ENCODE measurements at regions of chr5 and their contacts with region 1.

Region 1: GRCh38 chr5:91403438-91403837 is 20.3 kb upstream of the ARRDC3 start:
- DNase-seq: no peak
- ATAC-seq: no peak
- H3K4me3 ChIP-seq: no peak overlapping the region
- H3K27ac ChIP-seq: no peak overlapping the region
- H3K4me1 ChIP-seq: no peaks in the 10 kb centered on the region
- H3K27me3 ChIP-seq: no peaks in the 10 kb centered on the region
- CTCF ChIP-seq: no peak

Region 2: GRCh38 chr5:91311697-91312501 is 91.5 kb before region 1 on chr5:
- CTCF ChIA-PET with region 1: no interaction called
- POLR2A ChIA-PET with region 1: no interaction called
- in situ Hi-C with region 1: no loop called
- intact Hi-C with region 1: no loop called
- DNase-seq: peak; percentile 97
- ATAC-seq: peak; percentile 94
- H3K4me3 ChIP-seq: no peak overlapping the region
- H3K27ac ChIP-seq: peak overlapping the region; percentile 91
- H3K4me1 ChIP-seq: peaks cover 42% of the 10 kb centered on the region
- H3K27me3 ChIP-seq: no peaks in the 10 kb centered on the region
- CTCF ChIP-seq: no peak

Region 3: DNA sequence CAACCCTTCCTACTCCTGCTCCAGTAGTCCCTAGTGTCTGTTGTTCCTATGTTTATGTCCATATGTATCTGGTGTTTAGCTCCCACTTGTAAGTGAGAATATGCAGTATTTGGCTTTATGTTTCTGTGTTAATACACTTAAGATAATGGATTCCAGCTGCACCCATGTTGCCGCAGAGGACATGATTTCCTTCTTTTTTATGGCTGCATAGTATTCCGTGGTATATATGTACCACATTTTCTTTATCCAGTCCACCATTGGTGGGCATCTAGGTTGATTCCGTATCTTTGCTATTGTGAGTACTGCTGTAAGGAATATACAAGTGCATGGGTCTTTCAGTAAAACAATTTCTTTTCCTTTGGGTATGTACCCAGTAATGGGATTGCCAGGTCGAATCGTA is 15.1 kb before region 1 on chr5:
- CTCF ChIA-PET with region 1: no interaction called
- POLR2A ChIA-PET with region 1: interaction called, 19 read pairs
- in situ Hi-C with region 1: no loop called
- intact Hi-C with region 1: no loop called
- DNase-seq: no peak
- ATAC-seq: no peak
- H3K4me3 ChIP-seq: no peak overlapping the region
- H3K27ac ChIP-seq: no peak overlapping the region
- H3K4me1 ChIP-seq: peaks cover 11% of the 10 kb centered on the region; the same call in 1 of the 2 replicates
- H3K27me3 ChIP-seq: no peaks in the 10 kb centered on the region
- CTCF ChIP-seq: no peak

Measured in Panc1 (cell line).